ENCODE measurements at regions of chr3 and their contacts with region 1.

Region 1: GRCh38 chr3:190531381-190531780 is 17.5 kb downstream of the IL1RAP start:
- DNase-seq: no peak
- ATAC-seq: no peak
- H3K4me3 ChIP-seq: no peak overlapping the region
- H3K27ac ChIP-seq: no peak overlapping the region
- H3K4me1 ChIP-seq: peaks cover 14% of the 10 kb centered on the region
- H3K27me3 ChIP-seq: no peaks in the 10 kb centered on the region
- CTCF ChIP-seq: no peak

Region 2: DNA sequence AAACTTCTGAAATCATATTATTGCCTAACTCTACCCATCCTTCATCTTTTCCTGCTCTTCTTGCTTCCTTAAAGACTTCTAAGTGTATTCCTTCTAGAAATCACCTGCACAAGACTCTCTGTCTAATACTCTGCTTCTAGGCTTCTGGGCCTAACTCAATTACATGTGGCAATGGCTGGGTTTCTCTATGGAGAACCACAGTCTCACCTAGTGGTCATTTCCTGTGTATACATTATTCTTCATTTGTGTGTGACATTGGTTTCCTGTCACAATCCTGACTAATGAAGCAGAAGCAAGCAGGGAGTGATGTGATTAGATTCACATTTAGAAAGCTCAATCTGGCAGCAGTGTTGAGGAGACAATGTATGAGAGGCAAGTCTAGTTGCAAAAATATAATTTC is 192.3 kb before region 1 on chr3:
- intact Hi-C with region 1: no loop called
- DNase-seq: no peak
- ATAC-seq: no peak
- H3K4me3 ChIP-seq: no peak overlapping the region
- H3K27ac ChIP-seq: no peak overlapping the region
- H3K4me1 ChIP-seq: no peaks in the 10 kb centered on the region
- H3K27me3 ChIP-seq: no peaks in the 10 kb centered on the region
- CTCF ChIP-seq: no peak

Region 3: DNA sequence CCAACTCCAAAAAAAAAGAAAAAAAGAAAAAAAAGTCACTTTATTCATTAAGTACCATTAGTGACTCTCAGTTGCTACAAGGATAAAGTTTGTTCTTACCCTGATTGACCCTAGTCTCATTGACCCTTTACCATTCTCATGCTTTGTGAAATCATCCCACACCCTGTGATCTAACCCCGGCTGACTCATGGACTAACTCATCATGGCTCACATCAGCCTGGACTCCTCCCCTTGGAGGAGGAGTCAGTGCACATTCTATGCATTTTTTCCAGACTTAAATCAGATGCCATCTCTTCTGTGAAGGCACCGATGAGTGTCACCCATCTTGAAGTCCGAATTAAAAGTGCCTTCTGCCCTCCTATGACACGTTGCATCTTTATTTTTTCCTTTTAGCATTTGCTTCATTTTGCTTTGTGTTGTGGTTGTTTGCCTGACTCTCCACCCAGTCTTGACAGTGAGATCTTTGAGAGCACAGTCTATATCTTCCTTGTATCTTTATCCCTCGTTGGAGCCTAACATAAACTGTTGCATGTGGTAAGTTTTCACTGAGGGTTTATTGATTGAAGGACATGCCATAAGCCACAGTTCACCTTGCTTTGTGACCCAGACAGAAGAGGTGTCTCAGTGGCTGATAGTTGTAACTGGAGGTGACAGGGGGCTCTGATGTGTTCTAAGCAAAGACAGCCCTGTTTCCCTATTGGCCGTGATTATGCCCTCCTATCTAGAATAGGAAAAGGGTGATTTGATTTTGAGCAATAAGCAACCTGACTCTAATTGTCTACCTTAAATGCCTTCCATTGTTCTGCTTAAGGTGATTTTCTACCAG is 54.6 kb after region 1 on chr3:
- intact Hi-C with region 1: loop called in 1 of 2 experiments (anchors 2 kb)
- DNase-seq: peak in 1 of 2 donors; percentile 22
- ATAC-seq: peak; percentile 69 to 86 (median 78)
- H3K4me3 ChIP-seq: no peak overlapping the region
- H3K27ac ChIP-seq: no peak overlapping the region
- H3K4me1 ChIP-seq: peaks cover 8% of the 10 kb centered on the region
- H3K27me3 ChIP-seq: no peaks in the 10 kb centered on the region
- CTCF ChIP-seq: no peak

Measured in psoas muscle (tissue), 8 donors.